ENCODE measurements at regions of chr11 and their contacts with region 1.

Region 1: GRCh38 chr11:68459886-68460740 is 439 bp upstream of the PPP6R3 start:
- DNase-seq: peak; percentile 98
- ATAC-seq: peak; percentile 97

Region 2: GRCh38 chr11:68271781-68272608 is 188.1 kb before region 1 on chr11 and contains the start of gene C11orf24:
- intact Hi-C with region 1: loop called (anchors 1 kb)
- DNase-seq: peak; percentile 98
- ATAC-seq: peak; percentile 97
- total RNA-seq, gene C11orf24: 29.4 TPM

Region 3: DNA sequence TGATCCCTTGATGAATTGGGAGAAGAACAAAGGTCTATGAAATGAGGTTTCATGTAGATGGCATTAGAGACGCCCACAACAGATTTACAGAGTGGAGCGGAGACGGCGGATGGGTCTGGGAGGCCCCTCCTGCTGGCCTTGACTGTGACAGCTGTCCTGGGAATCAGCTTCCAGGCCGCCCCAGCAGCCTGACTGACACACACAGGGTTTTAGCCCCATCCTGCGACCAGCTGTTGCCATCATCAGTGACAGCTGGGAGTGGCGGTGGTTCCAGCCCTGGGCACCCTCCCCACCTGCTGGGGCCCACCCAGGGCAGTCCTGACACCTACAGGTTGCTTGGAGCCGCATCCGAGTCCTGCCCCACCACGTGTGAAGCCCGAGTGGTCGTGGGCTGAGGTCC is 63.6 kb before region 1 on chr11:
- intact Hi-C with region 1: no loop called
- DNase-seq: no peak
- ATAC-seq: no peak

Region 4: DNA sequence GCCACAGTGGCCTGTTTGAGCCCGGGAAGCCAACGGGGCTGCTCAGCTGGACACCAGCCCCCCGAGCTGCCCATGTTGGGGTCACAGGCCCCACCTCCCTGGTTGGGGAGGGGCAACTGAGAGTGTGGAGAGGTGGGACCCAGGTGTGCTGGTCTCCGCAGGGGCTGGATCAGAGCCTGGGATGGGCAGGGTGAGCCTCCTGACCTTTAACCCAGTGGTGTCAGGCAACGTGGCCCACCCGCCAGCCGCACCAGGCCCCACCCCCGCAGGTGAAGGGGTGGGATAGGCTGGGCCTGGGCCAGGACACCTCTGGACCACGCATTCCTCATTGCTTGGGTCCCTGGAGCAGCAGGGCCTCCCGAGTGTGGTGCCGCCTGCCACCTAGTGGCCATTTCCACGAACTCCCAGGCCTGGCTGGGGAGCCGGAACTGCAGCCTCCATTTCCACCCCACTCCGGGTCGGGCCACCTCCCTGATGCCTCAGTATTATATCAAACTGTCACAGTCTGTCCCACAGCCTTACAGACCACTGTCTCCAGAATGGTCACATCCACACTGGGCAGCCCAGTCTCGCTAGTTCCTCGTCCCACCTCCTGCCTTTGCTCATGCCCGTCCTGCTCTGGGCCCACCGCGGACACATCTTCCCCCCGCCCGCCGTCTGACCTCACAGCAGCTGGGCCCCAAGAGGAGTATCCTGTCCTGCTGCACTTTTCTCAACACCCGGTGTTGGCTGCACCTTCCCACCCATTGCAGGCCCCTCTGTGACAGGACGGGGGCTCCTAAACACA is 12.9 kb before region 1 on chr11:
- intact Hi-C with region 1: no loop called
- DNase-seq: peak; percentile 87
- ATAC-seq: peak; percentile 91

Region 5: DNA sequence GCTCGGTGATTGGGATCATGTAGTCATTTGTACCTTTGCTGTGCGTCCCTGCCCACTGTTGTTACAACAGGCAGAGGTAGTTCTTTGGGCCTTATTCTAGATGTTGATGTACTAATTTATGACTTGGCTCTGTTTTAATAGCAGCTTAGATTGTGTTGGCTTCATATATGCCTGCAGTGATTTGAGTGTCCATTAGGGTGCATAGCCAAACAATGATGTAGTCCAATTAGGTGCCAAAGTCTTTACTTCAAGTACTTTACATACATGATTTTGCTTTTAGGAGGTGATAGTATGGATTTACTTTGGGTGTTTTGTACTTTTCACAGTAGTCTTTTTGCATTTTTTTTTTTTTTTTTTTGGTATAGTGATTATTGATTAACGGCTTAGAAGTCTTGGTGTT is 46.8 kb after region 1 on chr11:
- intact Hi-C with region 1: loop called (anchors 5 kb)
- DNase-seq: no peak
- ATAC-seq: no peak

Region 6: DNA sequence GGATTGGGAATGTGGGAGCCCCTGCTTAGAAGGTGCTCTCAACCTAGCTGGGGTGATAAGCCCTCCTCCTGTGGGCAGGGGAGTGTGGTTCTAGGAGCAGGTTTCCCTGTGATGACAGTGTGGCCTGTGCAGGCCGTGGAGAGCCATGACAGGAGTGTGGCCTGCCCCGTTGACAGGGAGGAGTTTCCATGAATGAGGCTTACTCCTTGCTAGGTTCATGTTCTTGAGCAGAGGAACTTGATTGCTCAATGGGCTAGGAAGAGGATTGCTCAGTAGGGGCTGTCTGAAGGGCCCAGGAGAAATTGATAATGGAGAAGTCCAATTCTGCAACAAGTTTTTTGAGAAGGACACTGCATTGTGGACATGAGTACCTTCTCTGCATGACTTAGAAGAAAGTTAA is 92.4 kb after region 1 on chr11:
- intact Hi-C with region 1: no loop called
- DNase-seq: no peak
- ATAC-seq: peak; percentile 9

Region 7: GRCh38 chr11:68584097-68584496 is 124.0 kb after region 1 on chr11:
- intact Hi-C with region 1: loop called (anchors 5 kb)
- DNase-seq: no peak
- ATAC-seq: no peak